ENCODE measurements at regions of chr2 and their contacts with region 1.

Region 1: GRCh38 chr2:3423492-3424175 is 44.1 kb downstream of the TRAPPC12 start:
- DNase-seq: peak; percentile 23 to 44 (median 27)
- H3K4me3 ChIP-seq: no peak overlapping the region
- H3K4me3 Mint-ChIP-seq: no peak overlapping the region
- H3K27ac ChIP-seq: no peak overlapping the region
- H3K27ac Mint-ChIP-seq: peak overlapping the region in 4 of 7 donors; percentile 1 to 46 (median 36)
- H3K4me1 ChIP-seq: no peaks in the 10 kb centered on the region
- H3K4me1 Mint-ChIP-seq: no peaks in the 10 kb centered on the region
- H3K27me3 ChIP-seq: no peaks in the 10 kb centered on the region
- H3K27me3 Mint-ChIP-seq: no peaks in the 10 kb centered on the region
- CTCF ChIP-seq: peak; percentile 99

Region 2: DNA sequence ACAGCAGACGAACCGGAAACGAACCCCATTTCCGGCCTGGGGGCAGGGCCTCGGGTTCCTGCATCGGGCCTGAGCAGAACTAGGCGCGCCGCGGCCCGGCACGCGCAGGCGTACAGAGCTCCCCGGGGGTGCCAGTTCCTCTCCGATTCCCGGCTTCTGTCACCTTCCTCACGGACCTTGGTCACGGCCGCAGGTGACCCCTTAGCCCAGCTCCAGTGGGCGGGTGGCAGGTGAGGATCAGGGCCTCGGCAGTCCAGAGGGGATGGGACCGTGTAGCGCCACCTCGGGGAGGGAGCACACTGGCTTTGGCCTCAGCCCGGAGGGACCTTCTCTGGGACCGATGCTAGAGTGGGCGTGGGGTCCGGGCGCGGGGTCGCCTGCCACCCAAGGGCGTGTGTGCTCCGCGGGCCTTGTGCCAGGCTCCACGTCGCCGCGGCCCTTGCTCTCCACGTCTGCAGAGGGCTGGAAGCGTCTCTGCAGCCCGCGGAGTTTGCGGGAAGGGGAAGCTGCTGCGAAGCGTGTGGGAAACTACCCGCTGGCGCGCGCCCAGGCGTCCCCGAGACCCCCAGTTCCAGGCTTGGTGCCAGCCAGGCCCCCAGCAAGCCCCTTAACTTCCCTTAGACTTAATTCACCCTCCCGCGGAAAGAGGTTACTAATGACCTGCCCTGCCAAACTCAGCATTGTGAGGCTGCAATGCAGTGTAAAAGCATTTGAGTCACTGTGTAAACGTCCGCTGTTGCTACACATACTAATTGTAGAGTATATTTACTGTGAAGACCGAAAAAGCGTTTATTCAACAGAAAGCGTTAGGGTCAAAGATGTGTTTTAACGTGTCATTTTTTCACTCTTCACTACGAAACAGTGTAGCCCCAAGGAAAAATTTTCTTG is 43.7 kb before region 1 on chr2 and contains the start of gene TRAPPC12:
- intact Hi-C with region 1: no loop called
- DNase-seq: peak; percentile 81 to 89 (median 84)
- H3K4me3 ChIP-seq: peak within 1 kb of the TSS; percentile 52 to 96 (median 84)
- H3K4me3 Mint-ChIP-seq: peak within 1 kb of the TSS; percentile 92 to 96
- H3K27ac ChIP-seq: peak within 1 kb of the TSS; percentile 82 to 92
- H3K27ac Mint-ChIP-seq: peak within 1 kb of the TSS; percentile 91 to 97 (median 94)
- H3K4me1 ChIP-seq: peaks cover 36 to 41% of the 10 kb centered on the region in 2 donors
- H3K4me1 Mint-ChIP-seq: peaks cover 38% of the 10 kb centered on the region
- H3K27me3 ChIP-seq: no peaks in the 10 kb centered on the region
- H3K27me3 Mint-ChIP-seq: no peaks in the 10 kb centered on the region
- CTCF ChIP-seq: peak; percentile 28
- polyA plus RNA-seq, gene TRAPPC12: 26.6 to 72.1 (median 44.7) TPM

Region 3: GRCh38 chr2:3443506-3444073 is 20.0 kb after region 1 on chr2:
- intact Hi-C with region 1: no loop called
- DNase-seq: no peak
- H3K4me3 ChIP-seq: no peak overlapping the region
- H3K4me3 Mint-ChIP-seq: no peak overlapping the region
- H3K27ac ChIP-seq: peak overlapping the region in 1 of 2 donors; percentile 26
- H3K27ac Mint-ChIP-seq: no peak overlapping the region
- H3K4me1 ChIP-seq: no peaks in the 10 kb centered on the region
- H3K4me1 Mint-ChIP-seq: peaks cover 2% of the 10 kb centered on the region
- H3K27me3 ChIP-seq: no peaks in the 10 kb centered on the region
- H3K27me3 Mint-ChIP-seq: no peaks in the 10 kb centered on the region
- CTCF ChIP-seq: no peak

Region 4: GRCh38 chr2:3644891-3645605 is 221.4 kb after region 1 on chr2:
- intact Hi-C with region 1: loop called (anchors 2 to 5 kb)
- DNase-seq: no peak
- H3K4me3 ChIP-seq: no peak overlapping the region
- H3K4me3 Mint-ChIP-seq: no peak overlapping the region
- H3K27ac ChIP-seq: no peak overlapping the region
- H3K27ac Mint-ChIP-seq: peak overlapping the region in 1 of 7 donors; percentile 26
- H3K4me1 ChIP-seq: no peaks in the 10 kb centered on the region
- H3K4me1 Mint-ChIP-seq: no peaks in the 10 kb centered on the region
- H3K27me3 ChIP-seq: no peaks in the 10 kb centered on the region
- H3K27me3 Mint-ChIP-seq: peaks cover 0 to 6% (median 3%) of the 10 kb centered on the region in 3 donors
- CTCF ChIP-seq: no peak

Region 5: GRCh38 chr2:3651691-3652648 is 228.3 kb after region 1 on chr2:
- intact Hi-C with region 1: loop called (anchors 2 to 5 kb)
- DNase-seq: no peak
- H3K4me3 ChIP-seq: no peak overlapping the region
- H3K4me3 Mint-ChIP-seq: peak overlapping the region; percentile 60 to 88
- H3K27ac ChIP-seq: no peak overlapping the region
- H3K27ac Mint-ChIP-seq: peak overlapping the region in 2 of 7 donors; percentile 19 to 25
- H3K4me1 ChIP-seq: peaks cover 2 to 10% of the 10 kb centered on the region in 2 donors
- H3K4me1 Mint-ChIP-seq: peaks cover 11% of the 10 kb centered on the region
- H3K27me3 ChIP-seq: peaks cover 0 to 17% of the 10 kb centered on the region in 2 donors
- H3K27me3 Mint-ChIP-seq: peaks cover 10 to 31% (median 23%) of the 10 kb centered on the region in 3 donors
- CTCF ChIP-seq: no peak

Region 6: DNA sequence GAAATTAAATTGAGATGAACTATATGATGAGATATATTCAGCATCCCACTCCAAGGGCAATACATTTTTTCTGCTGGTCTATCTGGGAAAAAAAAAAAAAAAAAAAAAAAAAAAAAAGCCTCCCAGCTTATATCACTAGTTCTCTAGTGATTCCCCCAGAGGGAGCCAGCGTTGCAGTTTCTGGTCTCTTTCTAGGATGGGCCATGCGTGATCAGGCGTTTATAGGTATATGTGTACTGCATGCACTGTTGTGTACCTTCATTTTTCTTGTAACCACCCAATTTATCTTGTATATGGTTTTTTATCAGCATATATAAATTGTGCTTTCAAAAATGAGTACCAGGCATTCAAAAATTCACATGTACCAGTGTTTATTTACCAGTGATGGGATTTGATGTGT is 314.8 kb after region 1 on chr2:
- intact Hi-C with region 1: no loop called
- DNase-seq: no peak
- H3K4me3 ChIP-seq: no peak overlapping the region
- H3K4me3 Mint-ChIP-seq: no peak overlapping the region
- H3K27ac ChIP-seq: no peak overlapping the region
- H3K27ac Mint-ChIP-seq: no peak overlapping the region
- H3K4me1 ChIP-seq: no peaks in the 10 kb centered on the region
- H3K4me1 Mint-ChIP-seq: no peaks in the 10 kb centered on the region
- H3K27me3 ChIP-seq: no peaks in the 10 kb centered on the region
- H3K27me3 Mint-ChIP-seq: peaks cover 0 to 5% (median 1%) of the 10 kb centered on the region in 3 donors
- CTCF ChIP-seq: no peak

Measured in CD14-positive monocyte (primary cell).